CD4-positive, alpha-beta memory T cell (primary cell): ENCODE measurements at regions of chr7 and their contacts with region 1.

Region 1: GRCh38 chr7:30134611-30135545 is at the start of gene MTURN:
- DNase-seq: peak; percentile 86 to 92 (median 89)
- H3K4me3 ChIP-seq: peak within 1 kb of the TSS; percentile 66 to 69
- H3K4me3 Mint-ChIP-seq: peak within 1 kb of the TSS; percentile 87 to 96 (median 94)
- H3K27ac ChIP-seq: peak within 1 kb of the TSS; percentile 17
- H3K27ac Mint-ChIP-seq: peak within 1 kb of the TSS; percentile 75 to 95 (median 95)
- H3K4me1 ChIP-seq: peaks cover 14% of the 10 kb centered on the region
- H3K4me1 Mint-ChIP-seq: peaks cover 5 to 23% (median 12%) of the 10 kb centered on the region in 4 donors
- H3K27me3 ChIP-seq: no peaks in the 10 kb centered on the region
- H3K27me3 Mint-ChIP-seq: no peaks in the 10 kb centered on the region
- total RNA-seq, gene MTURN: 18.1 to 19.2 TPM

Region 2: DNA sequence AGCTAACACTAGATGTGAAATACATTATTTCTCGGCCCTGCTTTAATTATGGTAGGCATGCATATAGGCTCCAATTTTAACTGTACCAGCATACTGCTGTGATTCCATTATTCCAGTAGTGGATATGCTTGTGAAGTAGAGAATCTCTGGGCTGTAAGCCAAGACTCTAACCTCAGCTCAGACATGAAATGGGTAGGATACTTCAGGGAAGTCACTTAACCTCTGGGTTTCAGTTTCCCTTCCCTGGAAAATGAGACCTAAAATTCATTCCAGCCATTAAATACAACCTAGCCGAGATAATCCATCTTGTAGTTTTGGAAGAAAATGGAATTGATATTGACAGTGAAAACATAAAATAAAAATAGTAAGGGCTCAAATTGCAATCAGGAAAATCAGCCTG is 1117.2 kb before region 1 on chr7:
- CTCF ChIA-PET with region 1: no interaction called
- POLR2A ChIA-PET with region 1: no interaction called
- intact Hi-C with region 1: no loop called
- DNase-seq: no peak
- H3K4me3 ChIP-seq: no peak overlapping the region
- H3K4me3 Mint-ChIP-seq: no peak overlapping the region
- H3K27ac ChIP-seq: no peak overlapping the region
- H3K27ac Mint-ChIP-seq: no peak overlapping the region
- H3K4me1 ChIP-seq: no peaks in the 10 kb centered on the region
- H3K4me1 Mint-ChIP-seq: no peaks in the 10 kb centered on the region
- H3K27me3 ChIP-seq: no peaks in the 10 kb centered on the region
- H3K27me3 Mint-ChIP-seq: peaks cover 1 to 4% of the 10 kb centered on the region in 2 donors

Region 3: GRCh38 chr7:30148951-30149471 is 14.1 kb after region 1 on chr7:
- CTCF ChIA-PET with region 1: interaction called, 5 read pairs
- POLR2A ChIA-PET with region 1: interaction called, 12 read pairs
- intact Hi-C with region 1: no loop called
- DNase-seq: peak; percentile 24 to 60 (median 49)
- H3K4me3 ChIP-seq: no peak overlapping the region
- H3K4me3 Mint-ChIP-seq: peak overlapping the region in 6 of 8 donors; percentile 62 to 69 (median 66)
- H3K27ac ChIP-seq: no peak overlapping the region
- H3K27ac Mint-ChIP-seq: peak overlapping the region in 5 of 7 donors; percentile 70 to 89 (median 74)
- H3K4me1 ChIP-seq: peaks cover 12% of the 10 kb centered on the region
- H3K4me1 Mint-ChIP-seq: peaks cover 0 to 9% (median 6%) of the 10 kb centered on the region in 4 donors
- H3K27me3 ChIP-seq: no peaks in the 10 kb centered on the region
- H3K27me3 Mint-ChIP-seq: no peaks in the 10 kb centered on the region

Region 4: DNA sequence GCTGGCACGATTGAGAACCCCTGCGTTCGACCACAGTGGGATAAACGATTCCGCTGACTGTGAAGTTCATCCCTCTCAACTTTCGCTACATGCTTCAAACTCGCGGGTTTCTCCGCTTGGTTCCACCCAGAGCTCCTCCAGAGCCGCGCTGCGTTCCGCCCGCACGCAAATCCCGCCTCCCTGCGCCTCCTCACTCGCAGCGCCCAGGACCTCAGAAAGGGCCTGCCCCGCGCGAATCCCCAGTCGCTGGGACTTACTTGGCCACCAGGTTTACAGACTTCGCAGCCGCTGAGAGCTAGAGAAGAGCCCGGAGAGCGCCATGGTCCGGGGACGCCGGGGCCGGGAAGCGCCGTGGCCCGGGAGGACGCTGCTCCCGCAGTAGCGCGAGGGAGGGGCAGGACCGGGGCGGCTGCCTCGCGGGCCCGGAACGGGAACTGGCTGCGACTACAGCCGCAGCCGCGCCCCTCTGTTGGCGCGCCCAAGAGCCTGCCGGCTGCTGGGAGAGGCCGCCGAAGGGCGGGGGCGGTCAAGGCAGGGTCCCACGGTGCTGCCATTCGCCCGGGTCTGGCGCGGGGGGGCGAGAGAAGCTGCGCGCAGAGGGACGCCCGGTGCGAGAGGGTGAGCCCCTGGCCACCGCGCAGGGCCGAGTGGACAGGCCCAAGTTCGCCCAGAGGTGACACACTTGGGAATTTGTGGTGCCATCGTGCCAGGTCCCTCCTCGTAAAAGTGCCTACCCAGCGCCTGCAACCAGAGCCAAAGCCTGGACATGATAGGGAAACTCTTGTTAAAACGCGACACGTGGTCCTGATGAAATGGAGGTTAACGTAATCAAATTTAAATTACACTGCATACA is 343.7 kb after region 1 on chr7 and contains the start of gene NOD1:
- CTCF ChIA-PET with region 1: no interaction called
- POLR2A ChIA-PET with region 1: interaction called, 6 read pairs
- intact Hi-C with region 1: loop called (anchors 1 kb)
- DNase-seq: peak; percentile 54 to 72 (median 67)
- H3K4me3 ChIP-seq: peak within 1 kb of the TSS; percentile 70 to 98
- H3K4me3 Mint-ChIP-seq: peak within 1 kb of the TSS in 7 of 8 donors; percentile 94 to 98 (median 95)
- H3K27ac ChIP-seq: peak within 1 kb of the TSS; percentile 79
- H3K27ac Mint-ChIP-seq: peak within 1 kb of the TSS in 6 of 7 donors; percentile 77 to 96 (median 90)
- H3K4me1 ChIP-seq: peaks cover 44% of the 10 kb centered on the region
- H3K4me1 Mint-ChIP-seq: peaks cover 36 to 59% (median 41%) of the 10 kb centered on the region in 4 donors
- H3K27me3 ChIP-seq: no peaks in the 10 kb centered on the region
- H3K27me3 Mint-ChIP-seq: no peaks in the 10 kb centered on the region
- total RNA-seq, gene NOD1: 20.7 to 21.3 TPM